Activated B cell treated with CpG ODN at 0.5 μM for 24 hours (primary cell): ENCODE measurements at regions of chr3 and their contacts with region 1.

Region 1: DNA sequence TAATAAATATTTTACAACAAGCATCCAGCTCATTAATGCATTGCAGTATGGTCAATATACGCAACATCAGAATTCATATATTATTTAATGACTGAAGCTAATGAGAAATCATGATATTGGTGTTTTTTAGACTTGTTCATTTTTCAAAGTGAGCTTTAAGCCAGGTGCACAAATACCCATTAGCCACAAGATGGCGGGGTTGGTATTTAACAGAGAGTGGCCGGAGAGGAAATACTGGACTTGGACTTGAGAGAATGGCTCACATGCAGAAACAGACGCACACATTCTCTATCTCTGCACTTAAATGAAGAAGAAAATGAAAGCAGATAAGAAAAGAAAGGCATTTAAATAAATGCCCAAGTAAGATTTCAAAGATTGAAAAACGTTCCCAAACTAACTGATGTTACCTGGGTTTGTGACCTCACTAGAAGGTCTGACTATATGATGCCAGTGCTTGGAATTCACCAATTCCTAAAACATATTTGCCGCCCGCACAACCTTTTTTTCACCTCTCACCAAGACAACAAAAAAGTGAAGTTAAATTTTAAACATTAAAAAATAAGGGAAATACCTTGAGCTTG is 21.2 kb upstream of the CRBN start:
- DNase-seq: no peak
- ATAC-seq: peak; percentile 67
- H3K4me3 Mint-ChIP-seq: no peak overlapping the region
- H3K27ac Mint-ChIP-seq: no peak overlapping the region
- H3K4me1 Mint-ChIP-seq: peaks cover 9% of the 10 kb centered on the region
- H3K27me3 Mint-ChIP-seq: peaks cover 8% of the 10 kb centered on the region
- CTCF ChIP-seq: peak; percentile 71

Region 2: DNA sequence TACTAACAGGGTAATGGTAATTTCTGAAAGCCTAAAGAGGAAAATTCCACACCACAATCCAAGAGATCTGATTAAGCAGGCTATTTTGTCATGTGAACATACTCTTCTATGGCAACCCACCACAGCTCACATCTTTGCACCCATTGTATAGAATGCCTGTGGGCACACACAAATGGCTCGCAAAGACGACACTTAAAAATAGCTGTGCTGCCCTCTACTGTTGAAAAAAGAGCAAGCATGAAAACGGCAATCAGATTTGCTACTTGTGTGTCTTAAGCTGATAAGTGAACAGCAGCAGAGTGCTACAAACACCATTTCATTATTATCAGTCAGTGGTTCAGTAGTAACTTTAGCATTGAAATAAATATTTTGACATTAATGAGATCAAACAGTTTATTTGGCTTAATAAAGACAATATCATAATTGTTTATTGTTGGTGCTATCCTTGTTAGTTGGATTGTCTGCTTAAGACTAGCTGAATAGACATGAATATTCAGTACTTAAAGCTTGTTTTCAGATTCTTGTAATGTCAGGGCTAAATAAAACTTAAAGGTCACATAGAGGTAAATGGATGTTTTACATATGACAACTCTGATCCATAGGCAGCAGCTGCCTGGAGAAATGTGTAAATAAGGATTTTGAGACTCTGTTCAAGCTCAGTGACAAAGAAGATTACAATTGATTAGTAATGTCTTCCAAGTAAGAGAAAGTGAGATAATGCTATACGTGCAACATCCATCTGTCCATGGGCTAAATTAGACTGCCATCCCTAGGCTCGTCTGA is 797.6 kb after region 1 on chr3:
- CTCF ChIA-PET with region 1: interaction called, 27 read pairs
- POLR2A ChIA-PET with region 1: no interaction called
- intact Hi-C with region 1: loop called (anchors 1 kb)
- DNase-seq: no peak
- ATAC-seq: peak; percentile 18
- H3K4me3 Mint-ChIP-seq: no peak overlapping the region
- H3K27ac Mint-ChIP-seq: no peak overlapping the region
- H3K4me1 Mint-ChIP-seq: no peaks in the 10 kb centered on the region
- H3K27me3 Mint-ChIP-seq: no peaks in the 10 kb centered on the region
- CTCF ChIP-seq: no peak

Region 3: GRCh38 chr3:4271834-4272233 is 1071.1 kb after region 1 on chr3:
- CTCF ChIA-PET with region 1: interaction called, 138 read pairs
- POLR2A ChIA-PET with region 1: interaction called, 3 read pairs
- intact Hi-C with region 1: loop called (anchors 1 kb)
- DNase-seq: no peak
- ATAC-seq: peak; percentile 49
- H3K4me3 Mint-ChIP-seq: no peak overlapping the region
- H3K27ac Mint-ChIP-seq: no peak overlapping the region
- H3K4me1 Mint-ChIP-seq: peaks cover 26% of the 10 kb centered on the region
- H3K27me3 Mint-ChIP-seq: no peaks in the 10 kb centered on the region
- CTCF ChIP-seq: no peak

Region 4: DNA sequence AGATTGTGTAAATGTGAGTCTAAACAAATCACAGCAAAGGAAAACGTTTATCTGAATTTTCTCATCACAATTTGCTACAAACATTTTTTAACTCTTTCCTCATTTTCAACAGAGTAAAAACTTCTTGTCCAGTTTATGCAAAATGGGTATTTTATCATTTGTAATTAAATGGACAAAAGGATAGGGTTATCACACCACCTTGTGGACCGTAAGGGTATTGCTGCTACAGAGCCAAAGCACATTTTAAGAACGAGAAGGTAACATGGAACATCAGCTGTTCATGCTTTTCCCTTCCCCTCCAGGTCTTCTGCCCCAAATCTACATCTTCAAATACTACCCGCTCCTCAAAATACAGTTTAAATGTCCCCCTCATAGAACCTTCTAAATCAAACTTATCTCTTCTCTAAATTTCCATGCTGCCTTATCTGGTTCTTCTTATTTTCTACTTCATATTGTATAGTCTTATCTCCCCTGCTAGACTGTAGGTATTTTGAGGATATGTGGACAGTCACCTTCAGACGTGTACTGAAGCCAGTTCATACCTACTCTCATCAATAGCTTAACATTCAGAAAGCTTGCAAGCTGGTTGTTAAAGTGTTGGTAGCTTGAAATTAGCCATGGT is 1089.7 kb after region 1 on chr3:
- CTCF ChIA-PET with region 1: interaction called, 222 read pairs
- POLR2A ChIA-PET with region 1: no interaction called
- intact Hi-C with region 1: loop called (anchors 1 kb)
- DNase-seq: no peak
- ATAC-seq: peak; percentile 74
- H3K4me3 Mint-ChIP-seq: no peak overlapping the region
- H3K27ac Mint-ChIP-seq: no peak overlapping the region
- H3K4me1 Mint-ChIP-seq: no peaks in the 10 kb centered on the region
- H3K27me3 Mint-ChIP-seq: no peaks in the 10 kb centered on the region
- CTCF ChIP-seq: peak; percentile 95